Esophagus squamous epithelium (tissue), 5 donors: ENCODE measurements at regions of chr20 and their contacts with region 1.

Region 1: GRCh38 chr20:49610701-49611538 is 43.0 kb upstream of the PTGIS start:
- DNase-seq: no peak
- H3K4me3 ChIP-seq: peak overlapping the region in 2 of 4 donors; percentile 10 to 52
- H3K27ac ChIP-seq: peak overlapping the region in 3 of 4 donors; percentile 48 to 64 (median 58)
- H3K4me1 ChIP-seq: peaks cover 3 to 38% (median 22%) of the 10 kb centered on the region in 3 donors
- H3K27me3 ChIP-seq: peaks cover 0 to 15% (median 0%) of the 10 kb centered on the region in 4 donors
- CTCF ChIP-seq: peak; percentile 97 to 100 (median 100)
- POLR2A ChIP-seq: peak in 1 of 4 donors; percentile 14

Region 2: GRCh38 chr20:49338061-49338460 is 272.9 kb before region 1 on chr20:
- intact Hi-C with region 1: loop called (anchors 10 kb)
- DNase-seq: no peak
- H3K4me3 ChIP-seq: no peak overlapping the region
- H3K27ac ChIP-seq: no peak overlapping the region
- H3K4me1 ChIP-seq: peaks cover 0 to 3% (median 0%) of the 10 kb centered on the region in 3 donors
- H3K27me3 ChIP-seq: peaks cover 0 to 6% (median 0%) of the 10 kb centered on the region in 4 donors
- CTCF ChIP-seq: no peak
- POLR2A ChIP-seq: no peak

Region 3: DNA sequence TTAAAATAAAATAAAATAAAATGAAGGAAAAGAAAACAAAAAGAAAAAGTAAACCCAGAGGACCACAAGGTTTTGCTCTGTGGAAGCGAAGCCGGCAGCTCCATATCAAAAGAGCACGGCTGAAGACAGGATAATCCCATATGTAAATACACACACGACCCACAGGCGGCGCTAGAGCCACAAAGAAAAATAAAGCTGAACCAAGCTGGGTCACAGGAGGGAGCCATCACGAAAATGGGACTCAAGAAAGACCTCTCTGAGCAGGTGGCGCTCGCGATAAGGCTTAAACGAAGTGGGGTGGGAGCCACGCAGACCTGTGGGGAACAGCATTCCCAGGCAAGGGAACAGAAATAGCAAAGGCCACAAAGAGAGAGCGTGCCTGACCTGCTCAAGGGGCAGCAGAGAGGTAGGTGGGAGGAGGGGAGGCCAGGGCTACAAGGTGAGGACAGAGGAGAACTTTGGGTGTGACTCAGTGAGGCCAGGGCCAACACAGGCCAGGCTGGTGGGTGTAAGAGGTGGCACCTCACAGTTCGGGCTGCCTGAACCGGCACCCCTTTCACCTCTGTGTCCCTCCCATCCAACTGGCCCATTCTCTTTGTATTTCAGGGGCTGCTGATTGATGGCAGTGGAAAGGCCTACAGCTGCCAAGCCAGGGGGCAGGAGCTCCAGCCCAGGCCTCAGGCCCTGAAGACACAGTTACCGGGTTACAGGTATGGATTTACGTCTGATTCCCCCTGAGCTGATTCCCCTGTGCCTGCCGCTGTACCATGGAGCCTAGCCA is 69.0 kb before region 1 on chr20:
- intact Hi-C with region 1: loop called (anchors 5 kb)
- DNase-seq: no peak
- H3K4me3 ChIP-seq: no peak overlapping the region
- H3K27ac ChIP-seq: peak overlapping the region in 3 of 4 donors; percentile 8 to 55 (median 22)
- H3K4me1 ChIP-seq: peaks cover 0 to 6% (median 0%) of the 10 kb centered on the region in 3 donors
- H3K27me3 ChIP-seq: peaks cover 0 to 18% (median 0%) of the 10 kb centered on the region in 4 donors
- CTCF ChIP-seq: peak; percentile 79 to 92 (median 89)
- POLR2A ChIP-seq: no peak

Region 4: DNA sequence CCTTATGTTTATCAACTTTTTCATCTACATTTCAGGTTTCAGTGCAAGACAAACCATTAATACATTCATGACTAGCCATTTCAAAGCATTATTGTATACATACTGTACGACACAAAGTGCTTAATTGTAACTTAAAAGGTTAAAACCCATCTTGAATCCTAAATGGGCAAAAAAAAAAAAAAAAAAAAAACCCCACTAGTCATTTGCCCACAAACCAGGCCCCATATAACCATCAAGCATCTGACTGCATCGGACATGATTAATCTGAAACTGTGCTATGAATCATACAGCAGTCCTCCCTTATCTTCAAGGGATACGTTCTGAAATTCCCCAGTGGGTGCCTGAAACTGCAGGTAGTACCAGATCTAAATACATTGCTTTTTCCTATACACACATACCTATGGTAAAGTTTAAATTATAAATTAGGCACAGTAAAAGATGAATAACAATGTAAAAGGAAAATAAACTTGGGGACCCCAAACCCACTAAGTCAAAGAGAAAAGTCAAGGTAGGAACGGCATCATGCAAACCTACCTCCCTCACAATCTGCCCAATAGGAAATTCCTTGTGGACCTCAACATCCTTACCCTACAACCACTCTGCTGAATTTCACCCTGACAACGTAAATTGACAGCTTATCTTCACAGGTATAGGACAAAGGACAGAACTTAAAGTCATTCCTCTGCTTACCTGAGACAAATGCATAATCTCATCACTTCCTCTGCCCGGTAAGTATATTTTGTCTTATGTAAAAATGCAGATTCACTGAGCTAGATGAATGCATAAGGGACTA is 88.5 kb after region 1 on chr20:
- intact Hi-C with region 1: no loop called
- DNase-seq: no peak
- H3K4me3 ChIP-seq: no peak overlapping the region
- H3K27ac ChIP-seq: no peak overlapping the region
- H3K4me1 ChIP-seq: peaks cover 19 to 88% (median 44%) of the 10 kb centered on the region in 3 donors
- H3K27me3 ChIP-seq: no peaks in the 10 kb centered on the region
- CTCF ChIP-seq: no peak
- POLR2A ChIP-seq: no peak

Region 5: DNA sequence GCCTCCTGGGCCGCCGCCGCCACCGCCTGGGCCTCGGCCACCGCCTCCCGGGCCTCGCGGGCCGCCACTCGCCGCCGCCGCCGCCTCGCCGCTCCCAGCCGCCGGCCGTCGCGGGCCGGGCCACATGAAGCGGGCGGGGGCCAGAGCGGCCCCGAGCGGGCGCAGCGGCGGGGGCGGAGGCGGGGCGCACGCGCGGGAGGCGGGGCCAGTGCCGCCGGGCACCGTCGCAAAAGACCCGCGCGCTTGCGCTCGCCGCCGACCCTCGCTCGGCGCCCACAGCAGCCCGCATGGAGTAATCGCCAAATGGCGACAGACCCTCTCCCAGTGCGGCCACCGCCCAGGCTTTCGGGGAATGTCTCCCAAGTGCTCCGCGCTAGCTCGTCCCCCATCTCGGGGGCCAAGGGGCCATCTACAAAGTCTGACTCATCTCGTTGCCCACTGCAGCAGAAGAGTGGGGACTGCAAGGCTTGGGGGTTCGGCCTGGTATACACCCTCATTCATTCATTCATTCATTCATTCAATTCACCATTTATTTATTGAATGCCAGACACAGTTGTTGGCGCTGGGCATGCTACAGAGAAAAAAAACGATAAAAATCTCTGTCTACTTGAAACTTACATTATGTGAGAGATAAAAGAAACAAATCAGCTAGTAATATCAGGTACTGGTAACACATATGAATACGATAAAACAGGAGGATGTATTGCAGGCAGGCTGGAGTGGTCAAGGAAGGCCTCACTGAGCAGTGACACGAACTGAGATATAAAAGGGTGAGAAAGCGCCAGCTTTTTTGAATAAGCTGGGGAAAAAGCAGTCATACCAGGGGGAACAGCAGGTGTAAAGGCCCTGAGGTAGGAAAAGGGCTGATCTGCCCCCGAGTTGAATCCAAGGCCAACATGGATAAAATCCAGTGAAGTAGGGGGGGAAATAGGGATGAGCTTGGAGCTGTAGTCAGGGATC is 103.1 kb after region 1 on chr20 and contains the start of gene B4GALT5:
- intact Hi-C with region 1: no loop called
- DNase-seq: no peak
- H3K4me3 ChIP-seq: peak within 1 kb of the TSS; percentile 66 to 97 (median 96)
- H3K27ac ChIP-seq: peak within 1 kb of the TSS; percentile 93 to 96 (median 96)
- H3K4me1 ChIP-seq: peaks cover 7 to 62% (median 17%) of the 10 kb centered on the region in 3 donors
- H3K27me3 ChIP-seq: no peaks in the 10 kb centered on the region
- CTCF ChIP-seq: no peak
- POLR2A ChIP-seq: no peak
- total RNA-seq, gene B4GALT5: 24.1 to 34.2 (median 25.7) TPM

Region 6: GRCh38 chr20:49846206-49846807 is 235.4 kb after region 1 on chr20:
- intact Hi-C with region 1: loop called (anchors 5 kb)
- DNase-seq: no peak
- H3K4me3 ChIP-seq: no peak overlapping the region
- H3K27ac ChIP-seq: peak overlapping the region in 1 of 4 donors; percentile 10
- H3K4me1 ChIP-seq: peaks cover 12 to 27% (median 15%) of the 10 kb centered on the region in 3 donors
- H3K27me3 ChIP-seq: no peaks in the 10 kb centered on the region
- CTCF ChIP-seq: peak in 5 of 6 experiments; percentile 63 to 69 (median 68)
- POLR2A ChIP-seq: no peak

Region 7: GRCh38 chr20:50215101-50215690 is 604.3 kb after region 1 on chr20:
- intact Hi-C with region 1: no loop called
- DNase-seq: no peak
- H3K4me3 ChIP-seq: no peak overlapping the region
- H3K27ac ChIP-seq: peak overlapping the region; percentile 39 to 78 (median 72)
- H3K4me1 ChIP-seq: peaks cover 14 to 38% (median 16%) of the 10 kb centered on the region in 3 donors
- H3K27me3 ChIP-seq: peaks cover 0 to 3% (median 0%) of the 10 kb centered on the region in 4 donors
- CTCF ChIP-seq: no peak
- POLR2A ChIP-seq: no peak